Mammary epithelial cell (primary cell): ENCODE measurements at regions of chr11 and their contacts with region 1.

Region 1: DNA sequence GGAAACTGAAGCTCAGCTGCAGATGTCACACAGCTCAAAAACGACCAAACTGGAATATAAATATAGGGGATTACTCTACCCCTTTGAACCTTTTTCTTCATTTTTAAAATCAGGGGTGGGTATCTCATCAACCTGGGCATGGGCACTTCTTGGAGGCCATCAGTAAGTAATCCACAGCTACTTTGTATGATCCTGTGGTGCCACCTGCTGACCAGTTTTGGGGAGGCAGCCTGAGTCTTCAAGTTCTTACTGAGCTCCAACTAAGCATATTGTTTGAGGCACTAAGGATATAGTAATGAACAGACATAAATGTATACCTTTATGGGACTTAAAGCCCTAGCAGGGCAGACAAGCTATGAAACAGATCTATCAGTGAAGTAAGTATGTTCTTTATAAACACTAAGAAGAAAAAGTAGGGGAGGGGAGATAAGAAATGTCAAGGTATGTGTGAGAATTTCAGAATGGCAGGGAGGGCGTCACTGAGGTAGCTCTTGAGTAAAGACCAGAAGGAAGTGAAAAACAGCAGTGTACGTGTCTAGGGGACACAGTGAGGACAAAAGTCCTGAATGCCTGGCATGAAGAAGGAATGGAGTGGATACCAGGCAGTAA is 18.4 kb downstream of the TUB start:
- DNase-seq: peak; percentile 46
- H3K4me3 ChIP-seq: no peak overlapping the region
- H3K27ac ChIP-seq: no peak overlapping the region
- H3K4me1 ChIP-seq: no peaks in the 10 kb centered on the region
- H3K27me3 ChIP-seq: no peaks in the 10 kb centered on the region
- CTCF ChIP-seq: peak; percentile 86 to 88

Region 2: DNA sequence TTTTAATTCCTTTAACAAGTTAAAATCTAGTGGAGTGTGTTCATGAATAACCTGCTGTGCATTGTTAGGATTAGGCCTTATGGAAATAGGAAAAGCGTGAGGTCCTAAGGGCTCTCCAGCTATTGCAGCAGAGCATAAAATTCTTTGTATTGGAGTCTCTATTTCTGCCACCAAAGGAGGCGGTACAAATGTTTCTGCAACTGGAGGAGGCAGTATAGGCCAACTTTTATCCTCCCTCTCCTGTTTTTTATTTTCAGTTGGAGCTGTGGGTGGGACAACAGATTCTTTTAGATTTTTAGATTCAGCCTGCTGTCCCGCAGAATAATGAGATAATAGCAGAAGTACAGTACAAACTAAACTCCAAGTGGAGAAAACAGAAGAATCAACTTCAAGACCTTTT is 194.5 kb before region 1 on chr11:
- CTCF ChIA-PET with region 1: no interaction called
- dilution Hi-C with region 1: no loop called
- in situ Hi-C with region 1: no loop called
- intact Hi-C with region 1: loop called (anchors 2 kb)
- DNase-seq: peak; percentile 47
- H3K4me3 ChIP-seq: peak overlapping the region; percentile 31 to 58 (median 51)
- H3K27ac ChIP-seq: peak overlapping the region; percentile 40
- H3K4me1 ChIP-seq: peaks cover 38% of the 10 kb centered on the region
- H3K27me3 ChIP-seq: no peaks in the 10 kb centered on the region
- CTCF ChIP-seq: peak; percentile 47 to 59

Region 3: DNA sequence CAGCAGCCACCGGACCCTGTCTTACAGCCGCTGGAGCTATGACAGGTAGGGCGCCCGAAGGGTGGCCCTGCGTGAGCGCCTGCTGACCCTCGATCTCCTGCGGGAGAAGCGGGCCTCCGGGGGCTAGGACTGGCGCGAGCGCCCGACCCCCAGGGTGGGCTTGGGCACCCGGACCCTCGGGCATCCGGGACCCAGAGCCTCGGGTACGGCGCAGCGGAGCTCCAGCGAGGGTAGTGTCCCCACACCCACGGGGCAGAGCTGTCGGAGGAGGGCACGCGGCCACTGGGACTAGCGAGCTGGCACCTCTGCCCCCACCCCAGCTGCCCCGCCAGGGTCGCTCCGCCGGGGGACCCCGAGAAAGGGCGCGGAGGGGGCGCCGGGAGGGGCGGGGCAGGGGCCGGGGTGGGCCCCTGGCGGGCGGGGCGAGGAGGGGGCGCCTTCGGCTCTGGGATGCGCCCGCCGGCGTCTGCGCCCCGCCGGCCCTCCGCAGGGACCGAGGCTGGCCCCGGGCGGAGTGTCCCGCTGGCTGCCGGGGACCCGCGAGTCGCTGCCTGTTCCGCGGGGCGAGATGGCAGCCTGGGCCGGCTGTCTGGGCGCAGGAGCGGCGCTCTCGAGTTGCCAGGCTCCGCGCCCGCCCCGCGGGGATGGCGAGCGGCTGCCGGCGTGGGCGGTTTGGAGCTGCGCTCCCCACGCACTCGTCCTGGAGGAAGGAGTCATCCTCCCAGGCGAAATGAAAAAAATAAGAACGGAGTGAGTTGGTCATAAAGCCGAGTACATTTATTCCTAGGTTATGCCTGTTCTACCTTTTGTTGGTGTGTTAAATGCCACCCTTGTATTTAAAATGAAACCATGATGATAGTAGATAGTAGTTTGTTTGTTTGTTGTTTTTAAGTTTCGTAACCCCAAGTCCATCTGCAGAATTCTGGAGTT is 79.8 kb before region 1 on chr11:
- CTCF ChIA-PET with region 1: interaction called, 5 read pairs
- dilution Hi-C with region 1: loop called (anchors 10 kb)
- in situ Hi-C with region 1: loop called in 1 of 2 experiments (anchors 5 kb)
- intact Hi-C with region 1: no loop called
- DNase-seq: peak; percentile 34
- H3K4me3 ChIP-seq: peak overlapping the region; percentile 39 to 51 (median 40)
- H3K27ac ChIP-seq: no peak overlapping the region
- H3K4me1 ChIP-seq: peaks cover 19% of the 10 kb centered on the region
- H3K27me3 ChIP-seq: no peaks in the 10 kb centered on the region
- CTCF ChIP-seq: no peak

Region 4: GRCh38 chr11:8033305-8034105 is 65.9 kb before region 1 on chr11:
- CTCF ChIA-PET with region 1: interaction called, 7 read pairs
- dilution Hi-C with region 1: loop called (anchors 10 kb)
- in situ Hi-C with region 1: no loop called
- intact Hi-C with region 1: loop called (anchors 2 kb)
- DNase-seq: peak; percentile 56
- H3K4me3 ChIP-seq: no peak overlapping the region
- H3K27ac ChIP-seq: no peak overlapping the region
- H3K4me1 ChIP-seq: no peaks in the 10 kb centered on the region
- H3K27me3 ChIP-seq: no peaks in the 10 kb centered on the region
- CTCF ChIP-seq: peak; percentile 85 to 95

Region 5: DNA sequence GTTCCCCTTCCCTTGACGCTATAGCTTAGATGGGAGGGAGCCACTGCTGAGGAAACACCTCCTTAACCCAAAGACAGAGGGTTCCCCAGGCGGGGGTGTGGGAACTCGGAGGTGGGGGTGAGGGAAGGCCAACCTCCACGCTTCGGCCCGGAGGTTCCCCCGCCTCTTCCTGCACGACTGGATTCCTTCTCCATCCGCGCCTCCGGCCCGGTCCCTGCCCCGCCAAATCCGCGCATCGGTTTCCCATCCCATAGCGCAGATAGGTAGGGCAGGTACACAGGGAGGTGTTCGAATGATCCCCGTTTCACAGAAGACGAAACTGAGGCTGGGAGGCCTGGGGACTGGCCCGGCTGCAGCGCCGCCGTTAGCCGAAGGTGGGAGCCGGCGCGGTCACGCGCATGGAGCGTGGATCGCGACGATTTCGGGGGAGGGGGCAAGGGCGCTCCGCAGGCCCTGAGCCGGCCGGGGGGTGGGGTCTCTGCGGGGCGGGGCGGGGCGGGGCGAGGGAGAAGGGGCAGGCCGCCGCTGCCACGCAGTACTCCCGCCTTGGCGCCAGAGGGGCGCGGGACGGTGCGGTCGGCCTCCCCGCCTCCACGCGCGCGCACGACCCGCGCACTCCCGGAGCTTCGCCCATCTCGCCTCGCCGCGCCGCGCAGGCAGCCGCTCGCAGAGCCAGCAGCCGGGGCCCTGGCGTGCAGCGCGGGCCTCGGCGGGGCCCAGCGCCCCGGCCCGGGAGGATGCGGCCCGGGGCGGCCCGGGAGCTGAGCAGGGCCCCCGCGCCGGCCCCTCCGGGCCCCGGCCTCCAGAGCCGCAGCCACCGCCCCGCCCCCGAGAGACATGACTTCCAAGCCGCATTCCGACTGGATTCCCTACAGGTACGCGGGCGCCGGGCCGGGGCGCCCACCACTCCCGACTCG is 18.5 kb before region 1 on chr11 and contains the start of gene TUB:
- CTCF ChIA-PET with region 1: no interaction called
- dilution Hi-C with region 1: no loop called
- in situ Hi-C with region 1: no loop called
- intact Hi-C with region 1: loop called (anchors 1 kb)
- DNase-seq: no peak
- H3K4me3 ChIP-seq: peak within 1 kb of the TSS in 2 of 3 experiments; percentile 45 to 51
- H3K27ac ChIP-seq: no peak within 1 kb of the TSS
- H3K4me1 ChIP-seq: peaks cover 9% of the 10 kb centered on the region
- H3K27me3 ChIP-seq: peaks cover 6% of the 10 kb centered on the region
- CTCF ChIP-seq: no peak
- total RNA-seq, gene TUB: 3.8 to 4.8 TPM

Region 6: DNA sequence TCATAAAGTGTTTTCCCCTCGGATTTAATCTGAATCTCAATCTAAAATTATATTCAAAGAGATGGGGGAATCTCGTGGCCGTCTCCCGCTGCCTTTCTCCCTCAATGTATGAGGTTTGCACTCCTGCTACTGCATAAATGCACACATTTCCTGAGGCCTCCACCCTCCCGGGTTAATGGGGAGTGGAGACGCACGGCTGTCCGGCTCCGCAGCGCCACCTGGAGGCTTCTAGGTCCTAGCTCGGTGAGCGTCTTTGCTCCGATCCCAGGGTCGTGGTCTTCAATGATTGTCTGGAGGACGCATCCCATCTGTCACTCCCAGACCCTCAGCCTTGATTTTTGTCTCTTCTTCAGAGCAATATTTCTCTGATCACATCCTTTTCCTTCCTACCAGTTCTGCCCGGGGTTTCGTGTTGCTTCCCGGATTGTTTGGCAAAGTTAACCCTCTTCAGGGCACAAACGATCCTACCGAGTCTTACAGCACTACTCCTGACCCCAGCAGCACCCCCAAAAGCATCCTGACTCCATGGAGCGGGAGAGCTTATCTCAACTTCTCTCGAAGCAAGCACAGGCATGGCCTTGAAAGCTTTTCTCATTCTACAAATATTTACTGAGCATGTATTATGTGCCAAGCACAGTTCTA is 164.5 kb after region 1 on chr11 and contains the start of gene LMO1:
- CTCF ChIA-PET with region 1: no interaction called
- dilution Hi-C with region 1: no loop called
- in situ Hi-C with region 1: no loop called
- intact Hi-C with region 1: no loop called
- DNase-seq: peak; percentile 49
- H3K4me3 ChIP-seq: peak within 1 kb of the TSS; percentile 28 to 42 (median 33)
- H3K27ac ChIP-seq: no peak within 1 kb of the TSS
- H3K4me1 ChIP-seq: peaks cover 31% of the 10 kb centered on the region
- H3K27me3 ChIP-seq: peaks cover 50% of the 10 kb centered on the region
- CTCF ChIP-seq: peak; percentile 76 to 95
- total RNA-seq, gene LMO1: 0.17 to 0.54 TPM